Activated CD4-positive, alpha-beta T cell treated with anti-CD3 and anti-CD28 coated beads, Interleukin-2, amount 10 ng/mL, durations not matched to agents 7 days and 5 days (primary cell): ENCODE measurements at regions of chr1 and their contacts with region 1.

Region 1: DNA sequence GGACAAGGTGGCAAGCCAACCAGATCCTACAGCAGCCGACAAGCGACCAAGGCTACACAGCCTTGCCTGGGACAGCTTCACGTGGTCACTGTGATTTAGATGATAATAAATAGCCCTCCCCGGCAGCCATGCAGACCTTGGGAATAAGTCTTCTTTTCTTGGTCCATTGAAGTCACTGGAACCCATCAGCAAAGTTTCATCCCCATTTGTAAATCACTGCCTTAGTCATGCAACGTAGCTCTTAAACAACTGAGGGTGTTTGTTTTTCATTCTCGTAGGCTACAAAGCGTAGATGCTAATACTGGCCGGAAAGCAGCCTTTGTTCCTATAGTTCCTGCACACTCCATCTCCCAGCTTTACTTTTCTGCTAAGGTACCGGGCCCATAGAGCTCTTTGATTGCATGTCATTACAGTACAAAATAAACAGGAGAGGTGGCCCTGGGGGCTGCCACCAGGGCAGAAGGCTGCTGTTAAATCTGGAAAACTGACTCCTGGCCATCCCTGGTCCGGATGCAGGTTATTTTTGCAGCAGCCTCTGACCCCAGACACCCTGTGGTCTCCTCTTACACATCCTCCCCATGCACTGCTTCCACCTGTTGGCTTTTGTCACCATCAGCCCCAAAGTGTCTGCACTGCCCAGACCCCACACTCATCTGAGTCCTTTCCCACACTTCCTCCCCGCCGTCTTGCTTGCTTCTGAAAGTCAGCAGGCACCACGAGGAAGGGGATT is 105.5 kb downstream of the TOMM20 start:
- DNase-seq: no peak
- H3K4me3 Mint-ChIP-seq: no peak overlapping the region
- H3K27ac Mint-ChIP-seq: no peak overlapping the region
- H3K4me1 Mint-ChIP-seq: peaks cover 35% of the 10 kb centered on the region
- H3K27me3 Mint-ChIP-seq: no peaks in the 10 kb centered on the region

Region 2: GRCh38 chr1:234933475-234933874 is 89.7 kb before region 1 on chr1:
- CTCF ChIA-PET with region 1: no interaction called
- POLR2A ChIA-PET with region 1: no interaction called
- DNase-seq: no peak
- H3K4me3 Mint-ChIP-seq: no peak overlapping the region
- H3K27ac Mint-ChIP-seq: peak overlapping the region; percentile 66
- H3K4me1 Mint-ChIP-seq: peaks cover 34% of the 10 kb centered on the region
- H3K27me3 Mint-ChIP-seq: no peaks in the 10 kb centered on the region

Region 3: GRCh38 chr1:235035928-235036327 is 12.8 kb after region 1 on chr1:
- CTCF ChIA-PET with region 1: interaction called, 13 read pairs
- POLR2A ChIA-PET with region 1: no interaction called
- DNase-seq: no peak
- H3K4me3 Mint-ChIP-seq: no peak overlapping the region
- H3K27ac Mint-ChIP-seq: no peak overlapping the region
- H3K4me1 Mint-ChIP-seq: peaks cover 5% of the 10 kb centered on the region
- H3K27me3 Mint-ChIP-seq: no peaks in the 10 kb centered on the region